Heart left ventricle (tissue), 16 donors: ENCODE measurements at regions of chr18 and their contacts with region 1.

Region 1: GRCh38 chr18:12236934-12237832 is 17.0 kb upstream of the CIDEA start:
- DNase-seq: peak; percentile 71 to 87 (median 75)
- ATAC-seq: peak; percentile 90 to 97 (median 95)
- H3K4me3 ChIP-seq: no peak overlapping the region
- H3K27ac ChIP-seq: no peak overlapping the region
- H3K4me1 ChIP-seq: peaks cover 0 to 6% (median 0%) of the 10 kb centered on the region in 12 donors
- H3K27me3 ChIP-seq: peaks cover 0 to 10% (median 0%) of the 10 kb centered on the region in 9 donors
- CTCF ChIP-seq: peak; percentile 85 to 92 (median 88)
- POLR2A ChIP-seq: no peak

Region 2: GRCh38 chr18:11533942-11534496 is 703.2 kb before region 1 on chr18:
- intact Hi-C with region 1: no loop called
- DNase-seq: no peak
- ATAC-seq: no peak
- H3K4me3 ChIP-seq: no peak overlapping the region
- H3K27ac ChIP-seq: no peak overlapping the region
- H3K4me1 ChIP-seq: no peaks in the 10 kb centered on the region
- H3K27me3 ChIP-seq: no peaks in the 10 kb centered on the region
- CTCF ChIP-seq: no peak
- POLR2A ChIP-seq: no peak

Region 3: DNA sequence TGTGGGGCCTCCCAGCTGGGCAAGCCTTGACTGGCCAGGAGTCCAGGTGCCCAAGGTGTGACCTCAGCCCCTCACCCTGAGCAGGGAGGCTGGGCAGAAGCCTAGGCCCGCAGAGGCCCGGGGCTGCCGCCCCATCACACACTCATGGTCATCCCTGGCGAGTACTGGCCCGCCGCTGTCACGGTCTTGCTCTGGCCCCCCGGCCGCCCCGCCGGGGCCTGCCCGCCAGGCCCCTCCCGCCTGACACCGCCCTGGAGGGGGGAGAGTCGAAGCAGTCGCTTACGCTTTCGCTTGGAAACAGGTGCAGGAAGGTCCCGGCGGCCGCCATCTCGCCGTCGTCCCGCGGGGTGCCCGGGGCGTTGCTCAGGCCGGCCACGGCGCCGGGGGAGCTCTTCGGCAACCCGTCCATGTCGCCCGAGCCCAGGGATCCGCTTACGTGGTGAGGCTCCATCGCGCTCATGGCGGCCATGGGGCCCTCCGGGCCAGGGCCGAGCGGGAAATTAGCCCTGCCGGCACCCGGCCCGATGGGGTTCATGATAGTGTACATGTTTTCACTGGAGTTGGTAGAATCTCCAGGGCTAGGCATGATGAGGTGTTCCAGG is 170.2 kb before region 1 on chr18:
- intact Hi-C with region 1: loop called in 1 of 10 experiments (anchors 5 kb)
- DNase-seq: no peak
- ATAC-seq: peak in 1 of 4 donors; percentile 13
- H3K4me3 ChIP-seq: no peak overlapping the region
- H3K27ac ChIP-seq: no peak overlapping the region
- H3K4me1 ChIP-seq: no peaks in the 10 kb centered on the region
- H3K27me3 ChIP-seq: no peaks in the 10 kb centered on the region
- CTCF ChIP-seq: no peak
- POLR2A ChIP-seq: no peak

Region 4: GRCh38 chr18:12092398-12093229 is 144.6 kb before region 1 on chr18:
- intact Hi-C with region 1: loop called (anchors 2 to 10 kb)
- DNase-seq: peak in 3 of 5 donors; percentile 16 to 63 (median 56)
- ATAC-seq: peak; percentile 51 to 92 (median 85)
- H3K4me3 ChIP-seq: no peak overlapping the region
- H3K27ac ChIP-seq: no peak overlapping the region
- H3K4me1 ChIP-seq: no peaks in the 10 kb centered on the region
- H3K27me3 ChIP-seq: peaks cover 0 to 4% (median 0%) of the 10 kb centered on the region in 9 donors
- CTCF ChIP-seq: peak in 9 of 12 donors; percentile 13 to 47 (median 33)
- POLR2A ChIP-seq: no peak